ENCODE measurements at regions of chr9 and their contacts with region 1.

Region 1: DNA sequence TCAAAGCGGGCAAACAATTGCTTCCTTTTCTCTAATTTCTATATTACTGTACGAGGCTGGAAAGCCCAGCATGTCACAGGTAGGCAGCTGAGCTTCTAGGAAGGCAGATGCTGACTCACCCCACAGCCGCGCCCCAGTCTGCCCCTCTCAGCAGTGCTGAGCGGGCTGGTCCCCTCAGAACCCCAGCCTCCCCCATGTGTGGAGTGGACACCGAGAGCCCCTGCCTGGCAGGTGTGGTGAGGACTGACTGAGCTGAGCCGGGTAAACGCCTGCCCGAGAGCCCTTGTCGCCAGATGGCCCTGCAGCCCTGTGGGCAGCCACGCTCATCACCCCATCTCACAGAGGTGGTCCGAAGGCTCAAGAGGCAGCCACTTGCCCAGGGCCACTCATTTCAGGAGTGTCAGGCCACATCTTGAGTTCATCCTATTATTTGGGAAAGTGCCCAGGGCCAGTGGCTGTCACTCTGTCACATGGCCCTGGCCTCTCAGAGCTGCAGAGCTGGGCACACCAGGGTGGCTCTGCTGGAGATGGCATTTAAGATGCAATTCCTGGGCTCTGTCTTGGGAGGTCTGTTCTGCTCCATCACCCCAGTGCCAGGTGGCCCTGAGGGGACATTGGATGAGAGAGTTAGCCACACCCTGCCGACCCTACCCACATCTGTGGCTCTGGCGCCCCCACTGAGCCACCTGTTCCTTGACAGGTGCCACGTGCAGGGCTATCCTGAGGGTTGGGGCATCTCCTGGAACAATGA is 12.4 kb downstream of the CARD19 start:
- DNase-seq: no peak
- H3K4me3 Mint-ChIP-seq: no peak overlapping the region
- H3K27ac Mint-ChIP-seq: peak overlapping the region; percentile 86
- H3K4me1 Mint-ChIP-seq: peaks cover 45% of the 10 kb centered on the region
- H3K27me3 Mint-ChIP-seq: no peaks in the 10 kb centered on the region

Region 2: GRCh38 chr9:93003552-93004407 is 104.7 kb before region 1 on chr9:
- intact Hi-C with region 1: loop called (anchors 5 kb)
- DNase-seq: peak; percentile 40
- H3K4me3 Mint-ChIP-seq: no peak overlapping the region
- H3K27ac Mint-ChIP-seq: peak overlapping the region; percentile 72
- H3K4me1 Mint-ChIP-seq: peaks cover 31% of the 10 kb centered on the region
- H3K27me3 Mint-ChIP-seq: no peaks in the 10 kb centered on the region

Region 3: DNA sequence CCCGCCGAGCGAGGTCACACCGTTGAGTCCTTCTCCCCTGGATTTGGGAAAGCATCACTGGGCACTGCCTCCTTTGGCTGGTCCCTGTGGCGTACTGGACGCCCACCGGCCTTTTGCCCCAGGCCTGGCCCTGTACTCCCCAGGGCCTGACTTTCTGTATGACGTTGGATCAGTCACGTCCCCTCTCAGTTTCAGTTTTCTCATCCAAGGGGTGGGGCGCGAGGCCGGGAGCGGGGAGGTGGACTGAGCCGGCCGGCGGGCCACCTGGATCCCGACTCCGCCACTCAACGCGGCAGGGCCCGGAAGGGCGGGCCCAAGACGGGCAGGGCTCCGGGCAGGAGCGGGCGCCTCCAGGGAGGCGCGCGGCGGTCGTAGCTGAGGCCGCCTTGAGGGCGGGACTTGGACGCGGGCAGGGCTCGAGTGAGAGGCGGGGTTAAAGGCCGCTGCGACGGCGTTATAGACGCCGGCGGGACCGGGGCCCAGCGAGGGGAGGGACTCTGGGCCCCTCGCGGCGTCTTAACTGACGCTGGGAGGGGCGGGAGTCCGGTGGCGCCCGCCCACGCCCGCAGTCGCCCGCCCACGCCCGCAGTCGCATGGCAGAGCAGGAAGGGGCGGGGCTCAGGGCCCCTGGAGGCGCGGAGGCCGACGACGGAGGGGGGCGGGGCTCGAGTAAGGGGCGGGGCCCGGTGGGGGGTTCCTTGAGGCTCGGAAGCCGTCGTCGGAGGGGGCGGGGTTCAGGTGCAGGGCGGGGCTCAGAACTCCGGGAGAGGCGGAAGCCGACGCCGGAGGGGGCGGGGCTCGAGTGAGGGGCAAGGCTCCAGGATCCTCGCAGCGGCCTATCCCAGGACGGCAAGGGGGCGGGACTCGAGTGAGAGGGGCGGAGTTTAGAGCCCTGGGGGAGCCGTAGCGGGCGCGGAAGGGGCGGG is 13.0 kb before region 1 on chr9:
- intact Hi-C with region 1: loop called (anchors 1 kb)
- DNase-seq: peak; percentile 100
- H3K4me3 Mint-ChIP-seq: peak overlapping the region; percentile 83
- H3K27ac Mint-ChIP-seq: peak overlapping the region; percentile 98
- H3K4me1 Mint-ChIP-seq: peaks cover 66% of the 10 kb centered on the region
- H3K27me3 Mint-ChIP-seq: no peaks in the 10 kb centered on the region

Region 4: GRCh38 chr9:93134015-93134739 is 25.7 kb after region 1 on chr9 and contains the start of gene NINJ1:
- intact Hi-C with region 1: loop called (anchors 2 kb)
- DNase-seq: peak; percentile 78
- H3K4me3 Mint-ChIP-seq: peak within 1 kb of the TSS; percentile 90
- H3K27ac Mint-ChIP-seq: peak within 1 kb of the TSS; percentile 94
- H3K4me1 Mint-ChIP-seq: peaks cover 43% of the 10 kb centered on the region
- H3K27me3 Mint-ChIP-seq: no peaks in the 10 kb centered on the region
- total RNA-seq, gene NINJ1: 113 and 114 TPM in 2 replicates

Region 5: GRCh38 chr9:93154315-93154903 is 45.9 kb after region 1 on chr9:
- intact Hi-C with region 1: loop called (anchors 2 kb)
- DNase-seq: peak; percentile 24
- H3K4me3 Mint-ChIP-seq: no peak overlapping the region
- H3K27ac Mint-ChIP-seq: peak overlapping the region; percentile 22
- H3K4me1 Mint-ChIP-seq: peaks cover 36% of the 10 kb centered on the region
- H3K27me3 Mint-ChIP-seq: no peaks in the 10 kb centered on the region

Region 6: DNA sequence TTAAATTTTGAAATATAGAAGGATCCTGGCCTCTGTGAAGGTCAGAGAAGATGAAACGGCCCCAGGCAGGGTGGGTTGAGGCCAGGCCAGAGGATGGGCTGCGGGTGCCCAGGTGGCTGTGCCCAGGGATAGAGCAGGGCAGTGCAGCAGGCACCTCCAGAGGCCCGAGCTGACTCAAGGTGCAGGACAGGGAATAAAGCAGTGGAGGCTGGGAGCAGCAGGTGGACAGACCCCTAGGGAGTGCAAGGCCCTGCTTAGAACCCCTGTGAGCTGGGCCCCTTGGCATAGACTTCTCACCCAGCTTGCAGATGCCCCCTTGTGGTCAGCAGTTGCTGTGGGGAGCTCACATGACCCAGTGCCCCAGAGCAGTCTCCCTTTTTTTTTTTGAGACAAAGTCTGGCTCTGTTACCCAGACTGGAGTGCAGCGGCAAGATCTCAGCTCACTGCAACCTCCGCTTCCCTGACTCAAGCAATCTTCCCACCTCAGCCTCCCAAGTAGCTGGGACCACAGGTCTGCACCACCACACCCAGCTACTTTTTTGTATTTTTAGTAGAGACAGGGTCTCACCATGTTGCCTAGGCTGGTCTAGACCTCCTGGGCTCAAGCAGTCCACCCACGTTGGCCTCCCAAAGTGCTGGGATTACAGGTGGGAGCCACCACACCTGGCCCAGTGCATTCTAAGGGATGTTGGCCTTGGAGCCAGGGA is 194.2 kb after region 1 on chr9:
- intact Hi-C with region 1: loop called (anchors 5 kb)
- DNase-seq: peak; percentile 29
- H3K4me3 Mint-ChIP-seq: no peak overlapping the region
- H3K27ac Mint-ChIP-seq: no peak overlapping the region
- H3K4me1 Mint-ChIP-seq: no peaks in the 10 kb centered on the region
- H3K27me3 Mint-ChIP-seq: no peaks in the 10 kb centered on the region

Measured in activated T-helper 2 cell treated with anti-CD3 and anti-CD28 coated beads, Interferon-gamma antibody, Interleukin-2, Interleukin-4, amounts not matched to agents 10 μg/mL and 5 μg/mL and 100 μg/mL, durations not matched to agents 14 hours and 24 hours and 36 hours (primary cell).